ENCODE measurements at regions of chr1 and their contacts with region 1.

Region 1: GRCh38 chr1:37474046-37474759 is at the start of gene ZC3H12A:
- DNase-seq: peak; percentile 88 to 98 (median 92)
- ATAC-seq: peak; percentile 59
- H3K4me3 Mint-ChIP-seq: peak within 1 kb of the TSS; percentile 84 to 99 (median 96)
- H3K27ac Mint-ChIP-seq: peak within 1 kb of the TSS; percentile 91 to 99 (median 98)
- H3K4me1 Mint-ChIP-seq: peaks cover 47 to 69% (median 63%) of the 10 kb centered on the region in 4 donors
- H3K27me3 Mint-ChIP-seq: no peaks in the 10 kb centered on the region
- polyA plus RNA-seq, gene ZC3H12A: 1.5 to 10.0 (median 3.1) TPM

Region 2: GRCh38 chr1:37113285-37113997 is 360.8 kb before region 1 on chr1:
- POLR2A ChIA-PET with region 1: no interaction called
- DNase-seq: no peak
- ATAC-seq: no peak
- H3K4me3 Mint-ChIP-seq: no peak overlapping the region
- H3K27ac Mint-ChIP-seq: no peak overlapping the region
- H3K4me1 Mint-ChIP-seq: no peaks in the 10 kb centered on the region
- H3K27me3 Mint-ChIP-seq: peaks cover 6 to 36% (median 13%) of the 10 kb centered on the region in 5 donors

Region 3: GRCh38 chr1:37458528-37458927 is 15.7 kb before region 1 on chr1:
- POLR2A ChIA-PET with region 1: interaction called, 26 read pairs
- DNase-seq: peak in 1 of 10 donors; percentile 18
- ATAC-seq: peak; percentile 52 to 69
- H3K4me3 Mint-ChIP-seq: no peak overlapping the region
- H3K27ac Mint-ChIP-seq: peak overlapping the region in 5 of 10 donors; percentile 61 to 90 (median 83)
- H3K4me1 Mint-ChIP-seq: peaks cover 6 to 17% (median 8%) of the 10 kb centered on the region in 4 donors
- H3K27me3 Mint-ChIP-seq: no peaks in the 10 kb centered on the region

Region 4: GRCh38 chr1:37514350-37515184 is 40.4 kb after region 1 on chr1 and contains the start of gene MEAF6:
- POLR2A ChIA-PET with region 1: interaction called, 133 read pairs
- DNase-seq: peak; percentile 70 to 94 (median 86)
- ATAC-seq: peak; percentile 90 to 91
- H3K4me3 Mint-ChIP-seq: peak within 1 kb of the TSS; percentile 89 to 99 (median 98)
- H3K27ac Mint-ChIP-seq: peak within 1 kb of the TSS; percentile 98 to 100 (median 99)
- H3K4me1 Mint-ChIP-seq: peaks cover 30 to 51% (median 49%) of the 10 kb centered on the region in 4 donors
- H3K27me3 Mint-ChIP-seq: no peaks in the 10 kb centered on the region
- polyA plus RNA-seq, gene MEAF6: 118 to 184 (median 154) TPM